GM12878 (cell line): ENCODE measurements at regions of chr2 and their contacts with region 1.

Region 1: DNA sequence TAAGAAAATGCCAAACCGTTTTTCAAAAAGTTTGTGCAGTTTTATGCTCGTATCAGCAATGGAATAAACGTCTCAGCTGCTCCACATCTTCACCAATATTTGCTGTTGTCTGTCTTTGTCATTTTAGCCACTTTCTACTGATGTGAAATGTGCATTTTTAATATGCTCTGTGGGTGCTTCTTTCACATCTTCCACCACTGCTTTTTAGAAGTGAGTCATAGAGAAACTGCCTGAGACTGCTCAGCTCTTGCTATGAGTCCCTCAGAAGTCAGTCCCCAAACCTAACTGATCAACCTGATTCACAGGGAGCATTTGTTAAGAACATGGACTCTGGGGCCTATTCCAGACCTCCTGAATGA is 41.0 kb upstream of the EPC2 start:
- DNase-seq: peak; percentile 73
- ATAC-seq: peak; percentile 99
- H3K4me3 ChIP-seq: no peak overlapping the region
- H3K27ac ChIP-seq: no peak overlapping the region
- H3K4me1 ChIP-seq: peaks cover 13% of the 10 kb centered on the region
- H3K27me3 ChIP-seq: peaks cover 3% of the 10 kb centered on the region in 2 experiments; a peak in 2 of 4 replicates
- CTCF ChIP-seq: no peak
- EP300 ChIP-seq: peak; percentile 61 to 71; a peak in 3 of 4 replicates
- POLR2A ChIP-seq: no peak
- RAD21 ChIP-seq: no peak

Region 2: GRCh38 chr2:148362144-148362796 is 241.3 kb before region 1 on chr2:
- CTCF ChIA-PET with region 1: no interaction called
- POLR2A ChIA-PET with region 1: no interaction called
- RAD21 ChIA-PET with region 1: no interaction called
- SMC1A ChIA-PET with region 1: no interaction called
- in situ Hi-C with region 1: no loop called
- intact Hi-C with region 1: no loop called
- DNase-seq: no peak
- ATAC-seq: no peak
- H3K4me3 ChIP-seq: no peak overlapping the region
- H3K27ac ChIP-seq: no peak overlapping the region
- H3K4me1 ChIP-seq: no peaks in the 10 kb centered on the region
- H3K27me3 ChIP-seq: no peaks in the 10 kb centered on the region
- CTCF ChIP-seq: no peak
- EP300 ChIP-seq: no peak
- POLR2A ChIP-seq: no peak
- RAD21 ChIP-seq: no peak

Region 3: DNA sequence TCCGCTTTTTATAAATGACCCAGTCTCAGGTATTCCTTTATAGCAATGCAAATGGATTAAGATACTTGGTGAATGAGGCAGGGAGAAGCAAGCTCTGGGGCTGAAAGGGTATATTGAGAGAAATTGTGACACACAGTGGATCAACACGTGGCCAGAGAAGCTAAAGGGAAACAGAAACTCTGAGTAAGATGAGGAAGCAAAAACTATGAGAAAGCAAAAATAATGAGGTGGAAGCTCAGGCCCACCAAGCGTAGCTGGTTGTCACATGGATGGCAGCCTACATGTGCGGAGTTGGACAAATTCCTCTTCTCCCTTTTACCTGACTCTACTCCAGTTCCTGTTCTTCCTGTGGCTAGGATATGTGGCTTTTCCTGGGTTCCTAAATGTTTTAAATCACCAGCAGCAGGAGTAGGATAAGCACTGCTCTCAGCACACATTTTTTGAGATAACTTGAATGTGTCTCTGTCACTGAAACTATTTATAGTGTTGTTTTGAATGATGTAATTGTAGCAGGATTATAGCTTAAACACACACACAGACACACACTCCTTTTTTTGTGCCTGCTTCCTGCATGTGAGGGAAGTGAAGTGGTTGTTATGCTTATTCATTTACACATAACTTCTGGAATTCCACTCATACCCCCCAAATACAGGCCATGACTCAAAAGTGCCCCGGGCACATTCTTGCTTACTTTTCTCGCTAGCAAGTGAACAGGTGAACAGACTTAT is 10.9 kb after region 1 on chr2:
- CTCF ChIA-PET with region 1: interaction called, 5 read pairs
- POLR2A ChIA-PET with region 1: interaction called, 3 read pairs
- RAD21 ChIA-PET with region 1: interaction called, 4 read pairs
- SMC1A ChIA-PET with region 1: interaction called, 19 read pairs
- in situ Hi-C with region 1: no loop called
- intact Hi-C with region 1: no loop called
- DNase-seq: peak; percentile 53
- ATAC-seq: peak; percentile 94
- H3K4me3 ChIP-seq: peak overlapping the region; percentile 12; the same call in 1 of the 2 replicates
- H3K27ac ChIP-seq: peak overlapping the region; percentile 60
- H3K4me1 ChIP-seq: peaks cover 18% of the 10 kb centered on the region
- H3K27me3 ChIP-seq: no peaks in the 10 kb centered on the region
- CTCF ChIP-seq: no peak
- EP300 ChIP-seq: no peak
- POLR2A ChIP-seq: peak; percentile 60
- RAD21 ChIP-seq: no peak